ENCODE measurements at regions of chr4 and their contacts with region 1.

Region 1: GRCh38 chr4:146368209-146368608 is 153.5 kb downstream of the SLC10A7 start:
- DNase-seq: peak; percentile 32
- ATAC-seq: peak; percentile 100

Region 2: GRCh38 chr4:146175541-146176453 is 192.4 kb before region 1 on chr4 and contains the start of gene LSM6:
- intact Hi-C with region 1: no loop called
- DNase-seq: peak; percentile 92
- ATAC-seq: peak; percentile 99
- total RNA-seq, gene LSM6: 13.0 TPM

Region 3: GRCh38 chr4:146243141-146243882 is 124.9 kb before region 1 on chr4:
- intact Hi-C with region 1: no loop called
- DNase-seq: peak; percentile 37
- ATAC-seq: no peak

Region 4: DNA sequence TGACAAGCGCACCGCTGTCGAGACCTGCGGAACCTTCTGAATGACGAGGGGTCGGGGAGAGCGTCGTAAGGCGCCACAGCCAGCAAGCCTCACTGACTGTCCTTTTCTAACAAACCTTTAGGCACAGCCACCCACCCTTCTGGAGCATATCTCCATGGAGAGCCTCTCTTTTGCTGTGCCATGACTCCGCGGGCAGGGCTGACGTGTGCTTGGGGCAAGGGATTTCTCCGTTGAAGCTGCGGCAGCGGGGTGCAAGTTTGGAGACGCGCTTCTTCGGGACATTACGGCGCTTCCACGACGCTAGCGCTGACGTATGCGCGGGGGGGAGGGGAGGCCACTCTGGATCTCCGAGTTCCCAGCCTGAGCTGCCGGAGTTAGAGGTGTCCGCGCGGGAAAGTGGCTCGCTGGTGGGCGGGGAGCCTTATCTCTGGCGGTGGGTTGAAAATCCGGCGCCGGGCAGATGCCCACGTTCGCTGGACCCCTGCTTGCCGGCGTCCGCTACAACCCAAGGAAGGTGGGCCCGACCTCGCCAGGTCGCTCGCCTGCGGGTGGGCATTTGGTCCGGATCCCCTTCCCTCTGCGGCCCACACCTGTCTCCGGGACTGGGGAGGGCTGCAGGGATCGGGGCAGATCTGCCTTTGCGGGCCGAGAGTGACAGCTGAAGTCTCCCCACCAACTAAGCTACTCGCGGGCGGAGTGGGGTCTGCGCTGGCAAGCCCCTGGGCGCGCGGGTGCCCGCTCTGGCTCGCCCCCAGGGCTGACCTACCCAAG is 154.1 kb after region 1 on chr4:
- intact Hi-C with region 1: loop called (anchors 10 kb)
- DNase-seq: peak; percentile 96
- ATAC-seq: peak; percentile 99

Region 5: DNA sequence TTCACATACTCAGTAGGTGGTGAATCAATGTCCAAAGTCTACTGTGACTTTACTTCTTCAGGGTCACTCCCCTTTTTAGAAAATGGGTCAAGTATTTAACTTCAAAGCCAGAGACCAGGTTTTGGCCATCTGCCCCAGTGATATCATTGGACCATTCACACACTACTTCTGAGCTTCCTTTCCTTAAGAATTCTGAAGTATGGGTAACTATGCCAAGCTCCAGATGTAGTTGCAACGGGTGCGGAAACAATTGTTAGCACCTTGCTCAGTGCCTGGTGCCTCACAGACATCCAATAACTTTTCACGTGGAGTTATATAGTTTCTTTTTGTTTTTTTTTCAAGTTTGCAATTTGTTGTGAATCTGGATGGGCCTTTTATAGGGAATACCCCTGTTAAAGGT is 514.9 kb after region 1 on chr4:
- intact Hi-C with region 1: no loop called
- DNase-seq: no peak
- ATAC-seq: no peak